Ovary (tissue), 10 donors: ENCODE measurements at regions of chr18 and their contacts with region 1.

Region 1: GRCh38 chr18:65876290-65876689 is 125.5 kb downstream of the CDH7 start:
- DNase-seq: no peak
- H3K4me3 ChIP-seq: no peak overlapping the region
- H3K27ac ChIP-seq: no peak overlapping the region
- H3K4me1 ChIP-seq: no peaks in the 10 kb centered on the region
- H3K27me3 ChIP-seq: no peaks in the 10 kb centered on the region
- CTCF ChIP-seq: no peak
- EP300 ChIP-seq: no peak
- POLR2A ChIP-seq: no peak

Region 2: DNA sequence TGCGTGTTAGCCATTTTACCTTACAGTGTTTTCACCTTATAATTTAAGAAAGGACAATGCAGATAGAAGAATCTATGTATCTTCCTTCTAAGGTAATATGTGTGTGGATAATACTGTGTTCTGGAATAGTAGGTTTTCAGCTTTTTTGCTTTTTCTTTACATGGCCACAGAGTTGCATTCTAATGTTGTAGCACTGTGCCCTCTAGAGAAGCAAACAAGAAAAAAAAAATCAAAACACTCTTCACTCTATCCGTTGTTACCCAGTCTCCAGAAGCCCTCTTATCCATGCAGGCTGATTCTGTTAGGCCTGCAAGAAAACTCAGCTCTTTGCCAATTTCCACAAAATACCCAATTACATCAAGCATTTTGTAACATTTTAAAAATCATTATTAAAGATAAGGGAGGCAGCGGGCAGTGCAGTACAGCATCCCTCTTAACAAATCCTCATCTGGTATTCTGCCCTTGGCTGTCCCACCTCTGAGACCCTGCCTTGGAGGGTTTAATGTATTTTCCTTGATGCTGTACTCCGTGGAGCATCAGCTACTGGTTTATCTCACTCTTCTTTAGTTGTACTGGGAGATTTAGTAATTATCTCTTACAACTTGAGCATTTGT is 83.7 kb before region 1 on chr18:
- intact Hi-C with region 1: no loop called
- DNase-seq: no peak
- H3K4me3 ChIP-seq: no peak overlapping the region
- H3K27ac ChIP-seq: no peak overlapping the region
- H3K4me1 ChIP-seq: no peaks in the 10 kb centered on the region
- H3K27me3 ChIP-seq: no peaks in the 10 kb centered on the region
- CTCF ChIP-seq: no peak
- EP300 ChIP-seq: no peak
- POLR2A ChIP-seq: no peak

Region 3: DNA sequence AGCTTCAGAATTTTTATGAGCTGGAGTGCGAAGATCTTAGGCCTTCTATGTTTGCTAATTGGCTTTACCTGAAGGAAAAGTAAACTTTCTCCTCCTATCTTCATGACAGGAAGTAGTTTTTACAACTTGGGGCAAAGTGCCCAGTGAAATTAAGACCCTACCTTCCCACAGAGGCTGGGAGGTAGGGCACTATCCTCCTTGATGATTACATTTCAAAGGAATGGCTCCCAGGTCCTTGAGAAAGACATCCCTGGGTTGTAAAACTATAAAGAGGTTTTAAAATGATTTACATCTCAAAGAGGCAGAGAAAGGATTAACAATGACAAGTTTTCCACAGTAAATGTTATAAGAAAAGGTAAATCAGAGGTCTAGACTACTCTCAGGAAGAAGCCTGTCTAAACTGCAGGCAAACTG is 30.3 kb after region 1 on chr18:
- intact Hi-C with region 1: loop called in 1 of 4 experiments (anchors 2 kb)
- DNase-seq: no peak
- H3K4me3 ChIP-seq: no peak overlapping the region
- H3K27ac ChIP-seq: no peak overlapping the region
- H3K4me1 ChIP-seq: no peaks in the 10 kb centered on the region
- H3K27me3 ChIP-seq: no peaks in the 10 kb centered on the region
- CTCF ChIP-seq: no peak
- EP300 ChIP-seq: no peak
- POLR2A ChIP-seq: no peak

Region 4: DNA sequence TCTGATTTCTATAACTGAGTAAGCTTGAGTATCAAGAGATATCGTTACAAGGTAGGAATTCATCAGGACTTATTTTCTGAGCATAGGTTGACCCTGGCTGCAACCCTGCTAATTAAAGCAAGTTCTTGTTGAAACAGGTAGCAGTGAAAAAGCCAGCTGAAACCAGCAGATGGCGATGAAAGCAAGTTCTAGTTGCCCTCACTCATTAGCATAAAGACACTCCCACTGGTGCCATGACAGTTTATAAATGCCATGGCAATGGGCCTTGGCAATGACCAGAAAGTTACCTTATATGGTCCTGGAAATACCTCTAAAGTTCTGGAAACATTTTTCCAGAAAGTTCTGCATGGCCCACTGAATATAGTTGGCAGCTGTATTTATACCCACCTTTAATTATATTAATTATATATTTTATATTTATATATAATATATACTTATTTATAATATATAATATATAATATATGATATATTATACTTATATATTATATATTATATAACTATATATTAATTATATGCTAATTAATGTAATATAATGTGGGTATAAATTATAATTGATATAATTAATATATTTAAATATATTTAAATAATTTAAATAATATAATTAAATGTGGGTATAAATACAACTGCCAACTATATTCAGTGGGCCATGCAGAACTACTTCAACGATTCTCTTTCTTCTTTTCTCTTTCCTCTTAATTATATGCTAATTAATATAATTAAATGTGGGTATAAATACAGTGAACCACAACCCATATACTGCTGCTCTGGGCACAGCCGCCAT is 62.5 kb after region 1 on chr18:
- intact Hi-C with region 1: no loop called
- DNase-seq: no peak
- H3K4me3 ChIP-seq: no peak overlapping the region
- H3K27ac ChIP-seq: no peak overlapping the region
- H3K4me1 ChIP-seq: no peaks in the 10 kb centered on the region
- H3K27me3 ChIP-seq: no peaks in the 10 kb centered on the region
- CTCF ChIP-seq: no peak
- EP300 ChIP-seq: no peak
- POLR2A ChIP-seq: no peak

Region 5: GRCh38 chr18:66078925-66079800 is 202.9 kb after region 1 on chr18:
- intact Hi-C with region 1: no loop called
- DNase-seq: no peak
- H3K4me3 ChIP-seq: no peak overlapping the region
- H3K27ac ChIP-seq: no peak overlapping the region
- H3K4me1 ChIP-seq: no peaks in the 10 kb centered on the region
- H3K27me3 ChIP-seq: no peaks in the 10 kb centered on the region
- CTCF ChIP-seq: no peak
- EP300 ChIP-seq: no peak
- POLR2A ChIP-seq: no peak

Region 6: DNA sequence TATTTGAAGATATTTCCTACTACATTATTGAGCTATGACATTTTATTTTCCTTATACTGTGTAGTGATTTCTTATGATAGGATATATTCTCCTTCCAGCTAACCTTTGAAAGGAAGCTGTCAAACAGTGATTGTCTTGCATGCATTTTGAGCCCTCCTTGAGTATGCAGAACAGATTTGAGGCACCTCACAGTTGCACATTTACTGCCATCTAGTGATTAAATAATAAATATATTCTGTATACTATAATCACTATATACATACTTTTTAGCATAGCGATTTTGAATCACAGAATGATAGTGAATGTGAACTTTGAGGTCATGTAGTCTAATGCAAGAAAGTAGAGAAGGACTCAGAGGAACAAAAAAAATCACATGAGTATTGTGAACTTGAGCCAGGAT is 996.0 kb after region 1 on chr18:
- intact Hi-C with region 1: no loop called
- DNase-seq: no peak
- H3K4me3 ChIP-seq: no peak overlapping the region
- H3K27ac ChIP-seq: no peak overlapping the region
- H3K4me1 ChIP-seq: no peaks in the 10 kb centered on the region
- H3K27me3 ChIP-seq: no peaks in the 10 kb centered on the region
- CTCF ChIP-seq: no peak
- EP300 ChIP-seq: no peak
- POLR2A ChIP-seq: no peak